ENCODE measurements at regions of chr4 and their contacts with region 1.

Region 1: DNA sequence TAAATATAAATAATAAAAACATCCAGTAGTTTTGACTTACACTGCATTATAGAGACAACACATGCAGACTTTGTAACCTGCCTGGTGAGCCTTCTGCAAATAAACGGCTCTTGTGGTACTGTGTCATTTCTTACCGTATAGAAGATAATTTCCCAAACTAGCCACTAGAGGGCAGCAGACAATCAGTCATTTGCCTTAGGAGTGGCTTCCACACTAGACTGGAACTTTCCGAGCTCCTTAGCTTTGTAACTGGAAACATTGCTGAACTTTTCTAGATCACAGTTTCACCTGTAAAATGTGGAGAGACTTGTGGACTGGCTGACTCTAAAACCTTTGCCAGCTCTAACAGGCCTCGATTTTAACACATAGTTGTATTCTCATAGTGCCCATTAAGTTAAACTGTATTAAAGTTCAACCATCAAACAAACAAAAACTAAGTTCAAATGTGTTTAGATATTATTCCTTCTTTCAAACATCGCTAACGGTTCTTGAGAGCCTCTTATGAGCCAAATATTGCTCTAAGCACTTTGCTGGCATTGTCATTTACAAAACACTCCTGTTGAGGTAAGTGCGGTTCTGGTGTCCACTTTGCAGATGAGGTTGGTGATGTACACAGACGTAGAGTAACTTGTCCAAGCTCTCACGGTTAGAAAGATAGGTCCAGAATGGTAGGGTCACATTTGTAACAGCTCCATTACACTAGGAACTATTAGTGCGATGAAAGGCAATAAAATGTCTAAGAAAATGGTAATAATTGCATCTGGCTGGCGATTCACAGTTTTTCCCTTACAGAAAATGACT is 345.5 kb downstream of the ANK2 start:
- DNase-seq: peak; percentile 66
- ATAC-seq: peak; percentile 99
- H3K4me3 ChIP-seq: no peak overlapping the region
- H3K27ac ChIP-seq: no peak overlapping the region
- H3K4me1 ChIP-seq: no peaks in the 10 kb centered on the region
- H3K27me3 ChIP-seq: no peaks in the 10 kb centered on the region
- CTCF ChIP-seq: peak; percentile 62 to 94 (median 70); a peak in 5 of 6 replicates
- EP300 ChIP-seq: no peak
- POLR2A ChIP-seq: no peak
- RAD21 ChIP-seq: peak; percentile 98

Region 2: GRCh38 chr4:113270520-113271319 is 124.2 kb before region 1 on chr4:
- CTCF ChIA-PET with region 1: no interaction called
- POLR2A ChIA-PET with region 1: no interaction called
- RAD21 ChIA-PET with region 1: no interaction called
- SMC1A ChIA-PET with region 1: no interaction called
- in situ Hi-C with region 1: no loop called
- intact Hi-C with region 1: no loop called
- DNase-seq: no peak
- ATAC-seq: no peak
- H3K4me3 ChIP-seq: no peak overlapping the region
- H3K27ac ChIP-seq: no peak overlapping the region
- H3K4me1 ChIP-seq: no peaks in the 10 kb centered on the region
- H3K27me3 ChIP-seq: no peaks in the 10 kb centered on the region
- CTCF ChIP-seq: no peak
- EP300 ChIP-seq: no peak
- POLR2A ChIP-seq: no peak
- RAD21 ChIP-seq: no peak

Region 3: DNA sequence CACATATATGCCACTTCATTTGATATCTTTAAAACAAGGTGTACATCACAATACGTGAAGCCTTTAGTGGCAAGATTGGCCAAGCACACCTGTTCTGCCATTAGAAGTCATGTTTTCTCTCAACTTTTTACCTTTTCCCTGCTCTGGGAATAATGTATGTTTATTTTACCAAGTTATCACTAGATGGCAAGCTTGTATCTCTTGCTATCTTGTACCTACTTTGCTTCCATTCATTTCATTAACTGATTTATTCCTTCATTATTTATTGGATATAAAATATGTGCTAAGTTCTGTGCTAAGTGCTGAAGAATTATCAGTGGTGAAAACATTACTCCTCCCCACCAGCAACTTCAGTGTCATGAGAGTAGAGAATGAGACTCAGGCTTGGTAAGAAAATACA is 100.0 kb before region 1 on chr4:
- CTCF ChIA-PET with region 1: interaction called, 12 read pairs
- POLR2A ChIA-PET with region 1: no interaction called
- RAD21 ChIA-PET with region 1: no interaction called
- SMC1A ChIA-PET with region 1: interaction called, 6 read pairs
- in situ Hi-C with region 1: no loop called
- intact Hi-C with region 1: no loop called
- DNase-seq: no peak
- ATAC-seq: no peak
- H3K4me3 ChIP-seq: no peak overlapping the region
- H3K27ac ChIP-seq: no peak overlapping the region
- H3K4me1 ChIP-seq: no peaks in the 10 kb centered on the region
- H3K27me3 ChIP-seq: no peaks in the 10 kb centered on the region
- CTCF ChIP-seq: no peak; a peak in 1 of 6 replicates
- EP300 ChIP-seq: no peak
- POLR2A ChIP-seq: no peak
- RAD21 ChIP-seq: no peak

Region 4: DNA sequence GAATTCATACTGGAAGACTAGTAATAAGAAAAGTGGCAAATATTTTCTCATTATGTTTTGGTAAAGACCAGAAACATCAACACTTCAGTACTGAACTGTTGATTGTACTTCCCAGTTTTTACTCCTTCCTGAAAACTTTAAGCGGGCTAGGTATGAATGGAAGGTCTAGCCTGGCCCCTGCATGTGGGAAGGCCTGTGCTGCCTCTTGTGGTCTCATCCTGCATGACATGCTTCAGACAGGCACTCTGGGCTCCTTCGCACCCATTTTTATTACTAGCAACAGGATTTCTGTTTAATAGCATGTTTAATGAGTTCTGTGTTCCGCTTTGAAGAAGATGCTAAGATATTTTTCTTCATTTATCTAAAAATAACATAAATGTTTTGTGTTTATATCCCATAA is 66.4 kb before region 1 on chr4:
- CTCF ChIA-PET with region 1: no interaction called
- POLR2A ChIA-PET with region 1: no interaction called
- RAD21 ChIA-PET with region 1: no interaction called
- SMC1A ChIA-PET with region 1: no interaction called
- in situ Hi-C with region 1: no loop called
- intact Hi-C with region 1: no loop called
- DNase-seq: no peak
- ATAC-seq: peak; percentile 85
- H3K4me3 ChIP-seq: no peak overlapping the region
- H3K27ac ChIP-seq: no peak overlapping the region
- H3K4me1 ChIP-seq: no peaks in the 10 kb centered on the region
- H3K27me3 ChIP-seq: no peaks in the 10 kb centered on the region
- CTCF ChIP-seq: peak; percentile 30 to 55 (median 44); a peak in 4 of 6 replicates
- EP300 ChIP-seq: no peak
- POLR2A ChIP-seq: no peak
- RAD21 ChIP-seq: peak; percentile 29; the same call in 1 of the 2 replicates

Region 5: GRCh38 chr4:113761620-113762185 is 366.8 kb after region 1 on chr4 and contains the start of gene CAMK2D:
- CTCF ChIA-PET with region 1: interaction called, 6 read pairs
- POLR2A ChIA-PET with region 1: no interaction called
- RAD21 ChIA-PET with region 1: interaction called, 13 read pairs
- SMC1A ChIA-PET with region 1: interaction called, 16 read pairs
- in situ Hi-C with region 1: no loop called
- intact Hi-C with region 1: loop called (anchors 1 kb)
- DNase-seq: peak; percentile 81
- ATAC-seq: peak; percentile 56
- H3K4me3 ChIP-seq: peak within 1 kb of the TSS; percentile 99
- H3K27ac ChIP-seq: peak within 1 kb of the TSS; percentile 98
- H3K4me1 ChIP-seq: no peaks in the 10 kb centered on the region
- H3K27me3 ChIP-seq: no peaks in the 10 kb centered on the region
- CTCF ChIP-seq: peak; percentile 60 to 95 (median 69)
- EP300 ChIP-seq: peak in 1 of 2 experiments; percentile 33; a peak in 2 of 4 replicates
- POLR2A ChIP-seq: no peak
- RAD21 ChIP-seq: peak; percentile 89
- polyA plus RNA-seq, gene CAMK2D: 6.9 to 10.2 TPM

Region 6: DNA sequence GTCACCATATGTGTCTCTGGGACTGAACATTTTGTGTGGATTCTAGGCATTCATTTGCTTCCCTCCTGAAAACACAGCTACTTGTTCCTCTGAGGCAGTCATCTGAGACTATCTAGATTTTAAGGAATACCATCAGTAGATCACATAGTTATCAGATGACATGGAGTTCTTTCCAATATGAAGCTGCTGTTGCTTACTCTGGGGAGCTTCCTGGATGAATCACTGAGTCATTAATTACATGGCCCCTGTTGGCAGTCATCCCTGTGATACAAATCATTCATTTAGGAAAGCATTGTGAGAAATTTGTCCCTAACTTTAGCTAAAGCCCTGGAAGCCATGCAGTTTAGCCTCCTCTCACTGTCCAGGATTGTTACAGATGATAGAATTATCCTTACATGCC is 682.7 kb after region 1 on chr4:
- CTCF ChIA-PET with region 1: interaction called, 3 read pairs
- POLR2A ChIA-PET with region 1: no interaction called
- RAD21 ChIA-PET with region 1: interaction called, 19 read pairs
- SMC1A ChIA-PET with region 1: no interaction called
- in situ Hi-C with region 1: no loop called
- intact Hi-C with region 1: no loop called
- DNase-seq: no peak
- ATAC-seq: no peak
- H3K4me3 ChIP-seq: no peak overlapping the region
- H3K27ac ChIP-seq: no peak overlapping the region
- H3K4me1 ChIP-seq: no peaks in the 10 kb centered on the region
- H3K27me3 ChIP-seq: no peaks in the 10 kb centered on the region
- CTCF ChIP-seq: no peak
- EP300 ChIP-seq: no peak
- POLR2A ChIP-seq: no peak
- RAD21 ChIP-seq: no peak

Region 7: DNA sequence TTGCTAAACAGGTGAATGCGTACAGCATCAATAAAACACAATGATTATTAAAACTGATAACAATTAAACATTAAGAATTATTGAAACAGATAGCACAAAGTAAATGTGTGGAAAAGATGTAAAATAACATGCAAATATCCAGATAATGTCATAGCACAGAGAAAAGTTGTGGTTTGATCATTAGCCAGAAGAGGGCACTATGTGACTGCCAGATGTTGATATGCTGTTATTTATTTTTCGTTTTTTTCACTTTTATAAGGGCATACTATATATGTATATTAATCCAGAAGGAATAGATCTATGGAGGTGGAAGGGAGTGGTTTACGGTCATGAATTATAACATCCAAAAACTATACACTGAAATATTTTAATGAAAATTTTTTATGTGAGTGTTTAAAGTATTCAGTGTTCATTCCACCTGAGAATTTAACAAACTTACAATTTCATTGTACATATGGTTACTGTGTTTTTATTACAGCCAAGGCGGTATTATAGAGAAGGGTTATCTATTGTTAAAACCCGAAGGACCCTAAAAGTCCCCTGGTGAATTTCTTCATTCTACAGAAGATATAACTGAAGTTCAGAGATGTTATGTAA is 991.8 kb after region 1 on chr4:
- CTCF ChIA-PET with region 1: interaction called, 46 read pairs
- POLR2A ChIA-PET with region 1: interaction called, 3 read pairs
- RAD21 ChIA-PET with region 1: interaction called, 32 read pairs
- SMC1A ChIA-PET with region 1: interaction called, 41 read pairs
- in situ Hi-C with region 1: loop called (anchors 5 kb)
- intact Hi-C with region 1: loop called (anchors 1 kb)
- DNase-seq: peak; percentile 5
- ATAC-seq: peak; percentile 67
- H3K4me3 ChIP-seq: no peak overlapping the region
- H3K27ac ChIP-seq: no peak overlapping the region
- H3K4me1 ChIP-seq: no peaks in the 10 kb centered on the region
- H3K27me3 ChIP-seq: no peaks in the 10 kb centered on the region
- CTCF ChIP-seq: peak; percentile 49 to 76 (median 53)
- EP300 ChIP-seq: no peak
- POLR2A ChIP-seq: no peak
- RAD21 ChIP-seq: peak; percentile 92

Measured in GM12878 (cell line).